Activated T-helper 1 cell treated with anti-CD3 and anti-CD28 coated beads, Interleukin-12 subunit alpha, Interleukin-12 subunit beta, Interleukin-2, Interleukin-4 antibody, amounts not matched to agents 30 ng/mL and 10 ng/mL and 1 ng/mL, durations not matched to agents 14 hours and 24 hours and 36 hours (primary cell): ENCODE measurements at regions of chr7 and their contacts with region 1.

Region 1: GRCh38 chr7:47945261-47946001 is 2.8 kb downstream of the PKD1L1 start:
- DNase-seq: peak; percentile 44
- H3K4me3 Mint-ChIP-seq: no peak overlapping the region
- H3K27ac Mint-ChIP-seq: no peak overlapping the region
- H3K4me1 Mint-ChIP-seq: no peaks in the 10 kb centered on the region
- H3K27me3 Mint-ChIP-seq: no peaks in the 10 kb centered on the region

Region 2: DNA sequence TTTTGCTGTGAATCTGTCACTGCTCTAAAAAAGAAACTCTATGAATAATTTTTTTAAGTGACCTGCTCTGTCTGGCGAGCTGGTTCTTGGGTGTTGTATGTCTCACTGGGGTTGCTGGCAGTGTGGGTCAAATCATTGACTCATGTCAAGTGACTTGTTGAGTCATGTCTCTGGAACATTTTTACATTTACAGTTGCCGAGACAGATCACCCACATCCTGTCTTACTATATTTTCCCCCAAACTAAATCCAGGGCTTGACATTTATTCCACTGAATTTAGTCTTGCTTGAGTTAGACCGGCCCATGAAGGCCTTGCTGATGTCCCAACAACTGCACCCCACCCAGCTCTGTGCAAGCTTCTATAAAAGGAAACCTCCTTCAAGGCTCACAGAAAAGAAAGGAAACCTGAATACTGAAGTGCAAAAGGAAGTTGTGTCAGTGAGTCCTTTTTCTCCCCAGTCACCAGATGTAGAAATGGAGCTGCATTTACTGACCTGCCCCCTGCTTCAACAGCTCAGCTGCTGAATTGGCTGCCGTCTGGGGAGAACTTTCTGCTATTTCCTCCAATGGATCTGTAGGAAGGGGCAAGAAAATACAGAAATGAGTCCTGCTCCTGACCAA is 653.9 kb before region 1 on chr7:
- intact Hi-C with region 1: no loop called
- DNase-seq: peak; percentile 5
- H3K4me3 Mint-ChIP-seq: peak overlapping the region; percentile 15
- H3K27ac Mint-ChIP-seq: peak overlapping the region; percentile 82
- H3K4me1 Mint-ChIP-seq: peaks cover 19% of the 10 kb centered on the region
- H3K27me3 Mint-ChIP-seq: no peaks in the 10 kb centered on the region

Region 3: GRCh38 chr7:47968847-47969774 is 23.7 kb after region 1 on chr7:
- intact Hi-C with region 1: loop called (anchors 1 kb)
- DNase-seq: peak; percentile 26
- H3K4me3 Mint-ChIP-seq: no peak overlapping the region
- H3K27ac Mint-ChIP-seq: no peak overlapping the region
- H3K4me1 Mint-ChIP-seq: peaks cover 13% of the 10 kb centered on the region
- H3K27me3 Mint-ChIP-seq: no peaks in the 10 kb centered on the region

Region 4: DNA sequence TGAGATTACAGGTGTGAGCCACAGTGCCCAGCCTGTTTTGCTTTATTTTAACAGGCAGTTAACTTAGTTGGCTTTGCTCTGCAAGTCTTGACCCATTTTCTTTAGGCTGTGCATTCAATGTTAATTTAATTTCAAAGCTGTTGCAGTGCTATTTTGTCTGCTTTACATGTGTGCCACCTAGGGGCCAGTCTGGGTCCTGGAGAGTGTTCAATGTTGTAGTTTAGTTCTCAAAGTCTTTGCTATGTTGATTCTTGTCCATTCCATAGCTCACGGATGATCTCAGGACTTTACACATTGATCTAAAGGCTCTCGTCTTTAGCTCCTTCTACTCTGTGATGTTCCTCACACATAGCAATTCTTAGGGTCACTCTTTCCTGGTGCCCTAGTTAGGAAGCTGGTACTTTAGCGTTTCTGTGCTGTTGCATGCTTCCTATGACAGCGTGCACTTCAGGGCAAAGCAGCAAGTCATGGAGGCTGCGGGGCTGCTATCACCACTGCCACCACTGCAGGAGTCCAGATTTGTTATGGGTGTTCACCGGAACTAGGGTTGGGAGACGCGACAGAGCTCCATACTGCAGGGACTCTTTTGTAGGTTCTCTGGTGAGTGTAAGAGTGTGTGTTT is 209.5 kb after region 1 on chr7:
- intact Hi-C with region 1: loop called (anchors 1 kb)
- DNase-seq: peak; percentile 17
- H3K4me3 Mint-ChIP-seq: no peak overlapping the region
- H3K27ac Mint-ChIP-seq: no peak overlapping the region
- H3K4me1 Mint-ChIP-seq: no peaks in the 10 kb centered on the region
- H3K27me3 Mint-ChIP-seq: peaks cover 27% of the 10 kb centered on the region